ENCODE measurements at regions of chr2 and their contacts with region 1.

Region 1: GRCh38 chr2:70124983-70125480 is 37.8 kb downstream of the PCBP1 start:
- DNase-seq: no peak
- H3K4me3 ChIP-seq: peak overlapping the region; percentile 54
- H3K27ac ChIP-seq: peak overlapping the region; percentile 91
- H3K27me3 ChIP-seq: no peaks in the 10 kb centered on the region
- CTCF ChIP-seq: no peak

Region 2: GRCh38 chr2:70086838-70087701 is 38.0 kb before region 1 on chr2 and contains the start of gene PCBP1:
- CTCF ChIA-PET with region 1: no interaction called
- POLR2A ChIA-PET with region 1: interaction called, 29 read pairs
- DNase-seq: peak; percentile 85
- H3K4me3 ChIP-seq: peak within 1 kb of the TSS; percentile 97
- H3K27ac ChIP-seq: peak within 1 kb of the TSS; percentile 100
- H3K27me3 ChIP-seq: no peaks in the 10 kb centered on the region
- CTCF ChIP-seq: no peak
- polyA plus RNA-seq, gene PCBP1: 63.8 and 91.3 TPM in 2 replicates

Region 3: DNA sequence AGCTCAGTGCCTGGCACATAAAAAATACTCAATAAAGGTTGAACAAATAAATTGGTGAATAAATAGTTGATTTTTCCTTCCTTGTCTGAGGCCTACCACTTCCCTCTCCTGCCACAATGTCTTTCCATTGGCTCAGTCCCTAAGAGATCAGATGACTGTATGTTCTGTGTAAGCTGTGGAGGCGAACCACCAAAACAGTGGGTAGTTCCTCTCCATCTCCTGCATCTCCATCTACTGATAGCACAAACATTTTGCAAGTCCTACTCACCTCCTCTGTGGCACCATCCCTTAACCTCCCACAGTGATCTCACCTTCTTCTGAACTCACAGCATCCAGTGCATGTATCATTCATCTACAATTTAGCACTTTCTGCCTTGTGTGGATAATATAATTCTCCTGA is 12.5 kb after region 1 on chr2:
- CTCF ChIA-PET with region 1: interaction called, 6 read pairs
- POLR2A ChIA-PET with region 1: interaction called, 22 read pairs
- DNase-seq: no peak
- H3K4me3 ChIP-seq: no peak overlapping the region
- H3K27ac ChIP-seq: no peak overlapping the region
- H3K27me3 ChIP-seq: no peaks in the 10 kb centered on the region
- CTCF ChIP-seq: no peak

Measured in AG04450 (cell line).